Activated T-helper 1 cell treated with anti-CD3 and anti-CD28 coated beads, Interleukin-12 subunit alpha, Interleukin-12 subunit beta, Interleukin-2, Interleukin-4 antibody, amounts not matched to agents 30 ng/mL and 10 ng/mL and 1 ng/mL, durations not matched to agents 14 hours and 24 hours and 36 hours (primary cell): ENCODE measurements at regions of chr16 and their contacts with region 1.

Region 1: DNA sequence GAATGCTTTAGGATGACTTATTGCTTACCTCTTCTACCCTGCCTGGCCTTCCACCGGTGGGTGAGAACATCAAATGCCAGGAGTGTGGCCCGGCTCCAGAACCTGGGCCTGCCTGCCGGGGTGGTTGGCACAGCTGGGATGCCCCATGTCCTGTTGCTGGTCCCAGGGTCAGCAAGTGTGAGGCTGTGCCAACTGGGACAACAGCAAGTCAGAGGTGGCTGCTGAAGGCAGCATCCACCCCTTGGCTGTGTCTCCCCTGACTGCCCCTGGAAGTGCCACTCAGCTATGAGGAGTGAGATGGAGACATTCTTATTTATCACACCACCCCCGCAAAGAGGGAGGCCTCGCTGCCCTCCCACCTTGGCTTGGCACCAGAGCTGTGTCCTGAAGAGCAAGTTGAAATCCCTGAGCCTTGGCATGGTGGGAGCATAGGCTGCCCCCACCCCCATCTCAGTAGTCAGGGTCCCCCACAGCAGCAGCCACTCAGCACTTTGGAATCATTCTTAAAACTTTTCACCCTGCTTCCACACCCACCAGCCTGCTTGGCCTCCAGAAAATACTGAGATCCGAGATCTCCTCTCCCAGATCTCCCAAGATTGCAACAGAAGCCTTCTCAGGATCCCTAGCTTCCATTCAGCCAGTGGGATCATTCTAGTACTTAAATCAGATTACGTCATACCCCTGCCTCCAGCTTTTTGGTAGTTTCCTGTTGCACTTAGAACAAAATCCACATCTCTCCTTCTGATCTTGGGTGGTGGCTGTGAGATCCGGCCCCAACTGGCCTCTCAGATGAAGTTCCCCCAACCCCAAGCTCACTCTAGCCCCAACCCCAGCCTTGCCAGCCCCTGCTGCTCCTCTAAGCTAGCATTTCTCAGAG is 127.5 kb downstream of the SOCS1 start:
- DNase-seq: peak; percentile 12
- H3K4me3 Mint-ChIP-seq: peak overlapping the region; percentile 32
- H3K27ac Mint-ChIP-seq: peak overlapping the region; percentile 79
- H3K4me1 Mint-ChIP-seq: peaks cover 68% of the 10 kb centered on the region
- H3K27me3 Mint-ChIP-seq: no peaks in the 10 kb centered on the region

Region 2: GRCh38 chr16:11114366-11115164 is 13.9 kb before region 1 on chr16:
- intact Hi-C with region 1: loop called (anchors 2 kb)
- DNase-seq: peak; percentile 55
- H3K4me3 Mint-ChIP-seq: peak overlapping the region; percentile 40
- H3K27ac Mint-ChIP-seq: peak overlapping the region; percentile 88
- H3K4me1 Mint-ChIP-seq: peaks cover 44% of the 10 kb centered on the region
- H3K27me3 Mint-ChIP-seq: no peaks in the 10 kb centered on the region

Region 3: DNA sequence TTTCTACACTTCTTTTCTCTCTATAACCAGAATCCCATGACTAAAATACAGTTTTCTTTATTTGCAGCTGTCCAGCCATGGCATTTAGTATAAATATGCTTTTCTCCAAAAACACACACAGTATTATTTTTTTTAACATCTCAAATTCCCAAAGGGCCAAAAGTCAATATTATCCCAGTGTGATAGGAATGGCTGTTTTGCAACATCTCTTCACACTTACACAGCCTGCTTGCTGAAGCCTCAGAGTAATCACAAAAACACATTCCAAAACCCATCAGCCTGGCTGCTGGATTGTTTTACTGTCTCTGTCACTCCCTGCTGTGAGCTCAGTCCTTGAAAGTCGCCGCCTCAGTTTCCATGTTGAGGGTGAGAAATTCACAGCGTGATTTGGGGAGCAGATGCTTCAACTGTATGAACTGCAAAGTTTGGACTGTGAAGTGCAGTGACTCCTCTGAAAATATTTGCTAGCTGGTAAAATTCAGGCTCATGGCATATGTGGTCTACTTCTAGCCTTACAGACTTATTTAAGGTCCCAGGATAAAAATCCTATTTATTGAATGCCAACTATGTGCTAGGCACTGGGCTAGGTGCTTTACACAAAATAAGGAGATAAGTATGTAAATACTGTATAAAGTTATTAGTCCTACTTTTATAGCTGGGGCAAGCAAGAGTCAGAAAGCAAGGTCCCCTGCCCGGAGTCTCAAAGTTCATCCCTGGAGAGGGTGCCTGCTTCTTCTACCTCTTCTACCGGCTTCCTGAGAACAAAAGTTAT is 11.0 kb after region 1 on chr16:
- intact Hi-C with region 1: loop called (anchors 2 kb)
- DNase-seq: no peak
- H3K4me3 Mint-ChIP-seq: peak overlapping the region; percentile 48
- H3K27ac Mint-ChIP-seq: peak overlapping the region; percentile 89
- H3K4me1 Mint-ChIP-seq: peaks cover 62% of the 10 kb centered on the region
- H3K27me3 Mint-ChIP-seq: no peaks in the 10 kb centered on the region

Region 4: GRCh38 chr16:11201498-11202259 is 73.2 kb after region 1 on chr16:
- intact Hi-C with region 1: no loop called
- DNase-seq: no peak
- H3K4me3 Mint-ChIP-seq: no peak overlapping the region
- H3K27ac Mint-ChIP-seq: peak overlapping the region; percentile 55
- H3K4me1 Mint-ChIP-seq: peaks cover 68% of the 10 kb centered on the region
- H3K27me3 Mint-ChIP-seq: no peaks in the 10 kb centered on the region